ENCODE measurements at regions of chr12 and their contacts with region 1.

Region 1: DNA sequence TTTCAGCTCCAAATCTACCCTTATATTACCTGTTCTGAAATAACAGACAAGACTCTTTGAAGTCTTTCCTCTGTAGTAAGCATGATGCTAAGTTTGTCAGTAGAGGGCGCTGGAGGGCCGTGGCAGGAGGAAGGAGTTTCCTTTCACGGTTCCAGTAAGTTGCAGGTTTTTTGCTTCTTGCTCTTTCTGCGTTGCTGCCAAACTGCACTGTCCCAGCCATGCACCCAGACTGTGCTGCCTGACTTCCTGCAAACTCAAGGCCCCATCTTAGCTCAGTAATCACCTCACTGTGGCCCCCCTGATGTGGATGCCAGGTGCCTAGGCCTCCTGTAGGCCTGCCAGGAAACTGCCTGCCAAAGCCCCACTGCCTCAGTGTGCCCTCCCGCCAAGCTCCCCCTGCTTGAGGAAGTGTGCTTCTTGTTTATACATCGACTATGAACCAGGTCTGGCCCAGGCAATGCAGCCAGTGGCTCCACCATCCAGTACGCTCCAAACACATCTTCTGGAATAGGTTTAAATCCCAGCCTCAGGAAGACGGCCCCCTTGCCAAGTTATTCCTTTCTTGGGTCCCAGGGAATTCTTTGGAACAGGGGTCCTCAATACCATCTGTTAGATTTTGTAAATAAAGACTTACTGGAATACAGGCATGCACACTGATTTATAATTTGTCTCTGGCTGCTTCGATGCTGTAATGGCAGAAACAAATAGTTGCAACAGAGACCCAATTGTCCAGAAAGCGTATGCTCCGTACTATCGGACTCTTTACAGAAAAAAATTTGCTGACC is 193.7 kb upstream of the LRIG3 start:
- DNase-seq: peak; percentile 58
- ATAC-seq: peak; percentile 70

Region 2: DNA sequence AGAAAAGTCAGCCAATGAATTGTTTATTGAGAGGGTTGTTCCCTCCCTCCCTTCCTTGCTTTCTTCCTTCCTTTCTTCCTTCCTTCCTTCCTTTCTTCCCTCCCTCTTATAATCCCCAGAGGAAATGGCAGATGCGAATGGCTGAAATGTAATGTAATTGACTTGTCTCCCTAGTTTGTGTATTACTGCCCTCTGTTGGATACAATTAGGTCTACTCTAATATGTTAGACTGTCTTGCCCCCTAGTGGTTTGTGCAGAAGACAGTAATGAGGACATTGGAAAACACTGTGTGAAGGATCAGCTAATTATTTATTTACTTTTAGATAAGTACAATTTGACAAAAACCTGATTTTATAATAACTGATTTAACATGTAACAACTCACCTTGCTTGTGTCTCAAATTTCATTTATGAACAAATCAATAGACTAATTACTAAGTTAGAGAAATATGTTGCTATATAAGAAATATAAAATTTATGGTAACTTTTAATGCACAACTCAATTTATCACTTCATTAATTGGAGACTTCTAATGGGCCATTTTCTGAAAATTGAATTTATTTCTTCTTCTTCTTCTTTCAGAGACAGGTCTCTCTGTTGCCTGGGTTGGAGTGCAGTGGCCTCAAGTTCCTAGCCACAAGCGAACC is 36.1 kb after region 1 on chr12:
- intact Hi-C with region 1: loop called (anchors 2 kb)
- DNase-seq: no peak
- ATAC-seq: peak; percentile 92

Region 3: GRCh38 chr12:59344224-59344623 is 230.2 kb after region 1 on chr12:
- intact Hi-C with region 1: no loop called
- DNase-seq: no peak
- ATAC-seq: no peak